OCI-LY7 (cell line): ENCODE measurements at regions of chr6 and their contacts with region 1.

Region 1: GRCh38 chr6:125765944-125766343 is 16.5 kb downstream of the HEY2 start:
- DNase-seq: no peak
- H3K4me3 ChIP-seq: no peak overlapping the region
- H3K27ac ChIP-seq: no peak overlapping the region
- H3K4me1 ChIP-seq: no peaks in the 10 kb centered on the region
- CTCF ChIP-seq: no peak

Region 2: GRCh38 chr6:124872361-124873065 is 893.4 kb before region 1 on chr6:
- CTCF ChIA-PET with region 1: no interaction called
- POLR2A ChIA-PET with region 1: no interaction called
- intact Hi-C with region 1: no loop called
- DNase-seq: no peak
- H3K4me3 ChIP-seq: no peak overlapping the region
- H3K27ac ChIP-seq: no peak overlapping the region
- H3K4me1 ChIP-seq: no peaks in the 10 kb centered on the region
- CTCF ChIP-seq: no peak

Region 3: DNA sequence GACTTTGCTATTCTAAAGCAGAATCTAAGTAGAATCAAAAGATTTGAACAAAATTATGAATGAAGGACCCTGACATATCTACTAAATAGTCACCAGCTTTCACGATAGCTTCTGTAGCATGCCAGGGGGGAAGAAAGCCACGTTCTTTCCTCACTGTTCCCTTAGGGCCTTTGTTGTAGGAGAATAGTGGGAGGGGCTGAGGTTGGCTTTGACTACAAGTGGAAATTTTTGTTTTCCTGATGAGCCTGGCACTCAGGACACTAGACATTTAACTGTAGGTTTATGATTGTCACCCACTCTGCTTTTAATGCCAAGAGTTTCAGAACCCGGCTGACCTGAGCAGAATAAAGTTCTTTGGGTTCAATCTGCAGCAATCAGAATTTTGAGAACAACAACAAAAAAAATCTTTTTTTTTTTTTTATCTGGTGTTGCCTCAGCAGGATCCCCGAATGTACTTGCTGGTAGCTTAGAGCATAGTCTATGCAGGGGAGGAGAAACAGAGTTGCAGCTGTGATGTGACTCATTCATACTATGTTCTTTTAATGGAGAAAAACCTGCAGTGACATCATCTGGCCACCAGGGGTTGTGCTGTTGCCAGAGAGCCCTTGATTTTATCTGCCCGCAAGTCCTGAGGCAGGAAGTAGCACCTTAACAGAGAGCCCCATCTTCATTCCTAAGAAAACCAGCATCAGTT is 573.9 kb before region 1 on chr6:
- CTCF ChIA-PET with region 1: no interaction called
- POLR2A ChIA-PET with region 1: interaction called, 3 read pairs
- intact Hi-C with region 1: loop called (anchors 2 kb)
- DNase-seq: peak; percentile 69
- H3K4me3 ChIP-seq: no peak overlapping the region
- H3K27ac ChIP-seq: no peak overlapping the region
- H3K4me1 ChIP-seq: no peaks in the 10 kb centered on the region
- CTCF ChIP-seq: peak; percentile 83

Region 4: GRCh38 chr6:125512621-125513020 is 253.3 kb before region 1 on chr6:
- CTCF ChIA-PET with region 1: no interaction called
- POLR2A ChIA-PET with region 1: no interaction called
- intact Hi-C with region 1: loop called (anchors 5 kb)
- DNase-seq: peak; percentile 23
- H3K4me3 ChIP-seq: no peak overlapping the region
- H3K27ac ChIP-seq: no peak overlapping the region
- H3K4me1 ChIP-seq: no peaks in the 10 kb centered on the region
- CTCF ChIP-seq: peak; percentile 68